HepG2 (cell line): ENCODE measurements at regions of chr16 and their contacts with region 1.

Region 1: GRCh38 chr16:12613131-12613991 is 190.3 kb downstream of the CPPED1 start:
- DNase-seq: peak; percentile 100
- ATAC-seq: peak; percentile 86
- H3K4me3 ChIP-seq: peak overlapping the region in 1 of 3 experiments; percentile 35; a peak in 1 of 6 replicates
- H3K27ac ChIP-seq: peak overlapping the region; percentile 97
- H3K4me1 ChIP-seq: peaks cover 88% of the 10 kb centered on the region
- H3K27me3 ChIP-seq: no peaks in the 10 kb centered on the region
- CTCF ChIP-seq: 0 out of 2 replicates have a peak, but pooled peaks have one; percentile 9
- EP300 ChIP-seq: peak; percentile 90 to 95
- POLR2A ChIP-seq: peak in 1 of 2 experiments; percentile 49; a peak in 2 of 4 replicates
- RAD21 ChIP-seq: peak; percentile 35

Region 2: DNA sequence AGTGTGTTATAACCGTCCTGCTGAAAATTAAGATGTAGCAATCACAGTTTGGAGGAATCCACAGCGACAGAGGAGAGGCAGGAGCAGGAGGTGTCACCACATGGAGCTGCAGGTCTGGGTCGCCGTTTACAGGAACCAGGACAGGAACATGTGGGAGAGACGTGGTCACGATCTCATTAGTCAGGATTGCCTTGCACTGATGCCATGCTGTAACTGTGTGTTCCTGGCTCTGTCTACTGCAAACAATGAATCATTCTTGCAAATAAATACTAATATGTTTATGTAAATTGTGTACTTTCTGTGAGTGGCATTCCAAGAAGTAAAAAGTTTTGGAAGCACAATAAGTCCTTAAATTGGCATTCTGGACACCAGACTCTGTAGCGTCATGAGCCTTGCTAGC is 81.4 kb before region 1 on chr16:
- CTCF ChIA-PET with region 1: no interaction called
- POLR2A ChIA-PET with region 1: no interaction called
- in situ Hi-C with region 1: no loop called
- intact Hi-C with region 1: no loop called
- DNase-seq: no peak
- ATAC-seq: peak; percentile 34; the same call in 1 of the 3 replicates
- H3K4me3 ChIP-seq: no peak overlapping the region
- H3K27ac ChIP-seq: no peak overlapping the region
- H3K4me1 ChIP-seq: peaks cover 7% of the 10 kb centered on the region; the same call in 1 of the 2 replicates
- H3K27me3 ChIP-seq: no peaks in the 10 kb centered on the region
- CTCF ChIP-seq: no peak
- EP300 ChIP-seq: no peak
- POLR2A ChIP-seq: no peak
- RAD21 ChIP-seq: no peak

Region 3: DNA sequence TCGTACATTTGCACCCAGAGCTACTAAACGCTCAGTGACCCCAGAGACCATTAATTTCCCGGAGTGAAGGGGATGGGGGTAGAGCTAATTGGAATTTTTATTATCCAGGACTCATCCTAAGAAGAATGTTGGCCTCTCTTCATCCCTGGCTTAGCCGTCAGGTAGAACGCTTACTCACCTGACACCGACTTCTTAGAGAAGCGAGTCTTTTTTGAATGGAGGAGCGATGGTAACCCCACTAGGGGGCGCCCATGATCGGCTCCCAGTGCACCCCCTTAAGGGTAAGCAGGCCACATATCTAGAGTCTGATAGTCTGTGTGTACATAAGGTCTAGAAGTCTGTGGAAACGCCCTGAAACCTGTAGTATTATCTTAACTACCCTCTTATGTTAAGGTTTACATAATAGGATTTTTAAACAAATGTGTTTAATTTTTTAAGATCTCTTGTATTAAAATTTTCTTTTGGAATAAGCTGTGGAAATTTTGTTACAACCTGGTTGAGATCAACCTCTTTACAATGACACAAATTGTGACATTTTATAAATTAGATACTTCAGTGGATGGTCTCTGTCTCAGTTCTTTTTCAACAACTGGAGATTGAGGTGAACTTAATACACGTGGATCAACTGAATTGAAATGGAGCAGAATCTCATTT is 39.5 kb before region 1 on chr16:
- CTCF ChIA-PET with region 1: interaction called, 3 read pairs
- POLR2A ChIA-PET with region 1: interaction called, 13 read pairs
- in situ Hi-C with region 1: no loop called
- intact Hi-C with region 1: loop called (anchors 1 kb)
- DNase-seq: peak; percentile 86
- ATAC-seq: peak; percentile 84
- H3K4me3 ChIP-seq: no peak overlapping the region
- H3K27ac ChIP-seq: no peak overlapping the region
- H3K4me1 ChIP-seq: peaks cover 23% of the 10 kb centered on the region
- H3K27me3 ChIP-seq: no peaks in the 10 kb centered on the region
- CTCF ChIP-seq: peak; percentile 93
- EP300 ChIP-seq: peak in 1 of 2 experiments; percentile 62; a peak in 1 of 4 replicates
- POLR2A ChIP-seq: no peak
- RAD21 ChIP-seq: peak; percentile 99

Region 4: DNA sequence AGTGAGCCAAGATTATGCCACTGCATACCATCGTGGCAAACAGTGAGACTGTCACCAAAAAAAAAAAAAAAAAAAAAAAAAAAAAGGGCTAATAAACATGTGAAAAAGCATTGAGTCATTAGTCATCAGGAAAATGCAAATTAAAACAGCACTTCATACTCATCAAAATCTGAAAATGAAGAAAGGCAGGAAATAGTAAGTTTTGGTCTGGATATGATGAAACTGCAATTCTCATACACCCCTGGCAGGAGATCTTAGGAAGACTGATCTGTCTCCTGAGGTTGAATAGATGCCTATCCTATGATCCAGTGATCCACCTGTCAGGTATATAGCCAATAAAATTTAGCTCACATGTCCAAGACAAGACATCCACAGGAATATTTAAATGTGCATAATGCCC is 22.4 kb before region 1 on chr16:
- CTCF ChIA-PET with region 1: no interaction called
- POLR2A ChIA-PET with region 1: interaction called, 34 read pairs
- in situ Hi-C with region 1: no loop called
- intact Hi-C with region 1: no loop called
- DNase-seq: no peak
- ATAC-seq: no peak
- H3K4me3 ChIP-seq: no peak overlapping the region
- H3K27ac ChIP-seq: no peak overlapping the region
- H3K4me1 ChIP-seq: peaks cover 61% of the 10 kb centered on the region
- H3K27me3 ChIP-seq: no peaks in the 10 kb centered on the region
- CTCF ChIP-seq: no peak
- EP300 ChIP-seq: no peak
- POLR2A ChIP-seq: no peak
- RAD21 ChIP-seq: no peak

Region 5: GRCh38 chr16:12625068-12625467 is 11.7 kb after region 1 on chr16:
- CTCF ChIA-PET with region 1: no interaction called
- POLR2A ChIA-PET with region 1: interaction called, 14 read pairs
- in situ Hi-C with region 1: no loop called
- intact Hi-C with region 1: no loop called
- DNase-seq: no peak
- ATAC-seq: peak; percentile 24; the same call in 1 of the 3 replicates
- H3K4me3 ChIP-seq: no peak overlapping the region
- H3K27ac ChIP-seq: no peak overlapping the region
- H3K4me1 ChIP-seq: peaks cover 6% of the 10 kb centered on the region; the same call in 1 of the 2 replicates
- H3K27me3 ChIP-seq: no peaks in the 10 kb centered on the region
- CTCF ChIP-seq: no peak
- EP300 ChIP-seq: no peak
- POLR2A ChIP-seq: no peak
- RAD21 ChIP-seq: no peak

Region 6: DNA sequence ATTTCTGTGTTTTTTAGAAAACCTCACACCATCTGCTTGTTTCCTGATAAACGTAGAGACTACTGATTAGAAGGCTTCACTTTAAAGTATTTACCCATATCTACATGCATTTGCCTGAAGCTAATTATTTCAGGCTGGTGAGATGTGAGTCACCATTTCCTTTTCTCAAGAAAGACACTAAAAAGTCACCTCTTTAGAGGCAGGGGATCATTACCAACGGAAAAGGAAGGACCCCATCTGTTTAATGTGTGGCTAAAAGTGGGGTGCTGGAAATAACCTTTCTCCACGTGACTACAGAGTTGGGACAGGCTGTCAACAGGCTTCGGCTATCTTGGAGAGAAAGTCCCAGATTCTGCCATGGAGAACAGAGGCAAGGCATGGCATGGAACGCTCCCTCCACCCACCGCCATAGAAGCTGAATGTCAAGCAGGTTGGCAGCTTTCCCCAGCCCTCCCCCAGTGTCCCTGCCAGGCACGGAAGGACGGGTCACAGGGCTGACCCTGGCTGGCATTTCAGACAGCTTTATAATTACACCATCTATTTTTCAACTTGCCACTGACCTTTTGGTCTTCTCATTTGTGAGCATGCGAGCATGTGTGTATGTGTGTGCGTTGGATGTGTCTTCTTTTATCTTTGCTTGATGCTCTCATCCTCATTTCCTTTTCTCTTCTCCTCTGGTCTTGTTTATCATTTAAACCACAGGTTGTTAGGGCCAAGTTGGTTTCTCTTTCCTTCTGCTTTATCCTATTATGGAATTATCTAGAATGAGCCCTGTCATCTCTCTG is 33.3 kb after region 1 on chr16:
- CTCF ChIA-PET with region 1: no interaction called
- POLR2A ChIA-PET with region 1: interaction called, 162 read pairs
- in situ Hi-C with region 1: no loop called
- intact Hi-C with region 1: loop called (anchors 1 kb)
- DNase-seq: peak; percentile 47
- ATAC-seq: no peak
- H3K4me3 ChIP-seq: no peak overlapping the region
- H3K27ac ChIP-seq: no peak overlapping the region
- H3K4me1 ChIP-seq: peaks cover 48% of the 10 kb centered on the region
- H3K27me3 ChIP-seq: no peaks in the 10 kb centered on the region
- CTCF ChIP-seq: no peak
- EP300 ChIP-seq: no peak
- POLR2A ChIP-seq: no peak
- RAD21 ChIP-seq: no peak

Region 7: DNA sequence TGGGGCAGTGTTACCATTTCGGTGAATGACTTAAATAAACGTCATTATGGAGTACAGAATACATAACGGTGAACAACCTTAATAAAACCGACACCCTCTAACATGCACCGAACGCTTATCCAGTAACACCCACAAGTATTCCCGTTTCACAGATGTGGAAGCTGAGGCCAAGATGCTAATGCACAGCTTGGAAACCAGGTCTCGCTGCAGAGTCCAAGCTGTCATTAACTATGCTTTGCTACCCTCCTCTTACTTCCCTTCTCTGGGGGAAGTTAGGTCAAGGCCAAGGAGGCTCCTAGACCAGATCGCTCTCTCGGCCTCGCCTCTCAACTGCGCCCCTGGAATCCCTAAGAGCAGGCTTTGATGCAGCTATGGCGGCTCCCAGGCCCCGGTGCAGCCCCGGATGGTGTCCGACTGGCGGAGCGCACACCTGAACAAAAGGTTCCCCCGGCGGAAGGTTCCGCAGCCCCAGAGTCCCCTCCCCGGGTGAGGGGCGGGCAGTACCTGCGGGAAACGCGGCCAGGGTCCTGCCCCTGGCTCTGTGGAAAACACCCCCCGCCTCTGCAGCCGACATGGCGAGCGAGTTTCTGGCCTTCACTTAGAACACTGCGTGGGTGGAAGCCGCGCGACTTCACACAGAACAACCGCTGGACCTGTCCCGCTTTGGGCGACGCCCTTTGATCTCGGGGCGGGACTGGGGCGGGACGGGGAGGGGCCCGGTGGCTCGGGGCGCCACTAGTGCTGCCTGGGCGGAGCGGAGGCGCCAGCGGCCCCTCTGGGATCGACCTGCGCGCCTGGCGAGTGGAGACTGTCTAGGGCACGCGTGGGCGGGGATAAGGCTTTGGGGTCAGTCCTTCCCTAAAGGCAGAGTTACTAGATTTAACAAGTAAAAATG is 190.1 kb after region 1 on chr16 and contains the start of gene CPPED1:
- CTCF ChIA-PET with region 1: no interaction called
- POLR2A ChIA-PET with region 1: interaction called, 21 read pairs
- in situ Hi-C with region 1: no loop called
- intact Hi-C with region 1: loop called (anchors 1 kb)
- DNase-seq: peak; percentile 93
- ATAC-seq: peak; percentile 92
- H3K4me3 ChIP-seq: peak within 1 kb of the TSS; percentile 86 to 97 (median 87)
- H3K27ac ChIP-seq: peak within 1 kb of the TSS; percentile 97
- H3K4me1 ChIP-seq: peaks cover 58% of the 10 kb centered on the region
- H3K27me3 ChIP-seq: peaks cover 0 to 7% of the 10 kb centered on the region in 2 experiments; a peak in 1 of 5 replicates
- CTCF ChIP-seq: peak; percentile 45
- EP300 ChIP-seq: peak in 1 of 2 experiments; percentile 89
- POLR2A ChIP-seq: peak; percentile 94 to 97
- RAD21 ChIP-seq: peak; percentile 78
- total RNA-seq, gene CPPED1: 66.6 and 118 TPM in 2 replicates